ENCODE measurements at regions of chr1 and their contacts with region 1.

Region 1: DNA sequence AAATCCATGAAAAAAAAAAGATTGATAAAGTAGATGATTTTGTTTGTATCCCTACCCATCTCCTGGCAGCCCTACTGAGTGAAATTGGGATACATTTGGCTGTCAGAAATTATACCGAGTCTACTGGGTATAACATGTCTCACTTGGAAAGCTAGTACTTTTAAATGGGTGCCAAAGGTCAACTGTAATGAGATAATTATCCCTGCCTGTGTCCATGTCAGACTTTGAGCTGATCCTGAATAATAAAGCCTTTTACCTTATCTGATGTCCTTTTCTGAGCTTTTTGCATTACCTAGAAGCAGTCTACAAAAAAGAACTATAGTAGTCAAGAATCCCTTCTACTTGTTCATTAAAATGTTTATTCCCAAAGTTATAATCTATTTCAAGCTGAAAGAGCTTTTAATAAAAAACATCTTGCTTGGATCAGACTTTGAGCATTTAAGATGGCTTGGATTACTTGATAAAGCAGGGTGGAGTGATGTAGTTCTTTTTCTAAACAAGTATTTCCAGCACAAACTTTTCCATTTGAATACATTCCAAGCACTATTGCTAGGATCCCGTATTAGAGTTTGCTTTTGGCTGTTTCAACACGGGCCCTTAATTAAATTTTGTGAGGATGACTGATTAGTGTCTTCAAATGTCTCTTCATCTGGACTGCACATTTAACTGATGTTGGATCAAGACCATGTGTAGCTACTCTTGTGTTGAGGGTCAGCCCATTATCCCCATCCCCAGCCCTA is 69.2 kb downstream of the DTL start:
- DNase-seq: no peak
- ATAC-seq: no peak
- H3K4me3 ChIP-seq: no peak overlapping the region
- H3K27ac ChIP-seq: no peak overlapping the region
- H3K4me1 ChIP-seq: no peaks in the 10 kb centered on the region
- H3K27me3 ChIP-seq: no peaks in the 10 kb centered on the region
- CTCF ChIP-seq: no peak

Region 2: GRCh38 chr1:211951856-211952255 is 152.9 kb before region 1 on chr1:
- CTCF ChIA-PET with region 1: no interaction called
- POLR2A ChIA-PET with region 1: interaction called, 12 read pairs
- in situ Hi-C with region 1: no loop called
- intact Hi-C with region 1: no loop called
- DNase-seq: peak; percentile 81
- ATAC-seq: peak; percentile 76
- H3K4me3 ChIP-seq: no peak overlapping the region
- H3K27ac ChIP-seq: no peak overlapping the region
- H3K4me1 ChIP-seq: no peaks in the 10 kb centered on the region
- H3K27me3 ChIP-seq: no peaks in the 10 kb centered on the region
- CTCF ChIP-seq: no peak

Region 3: GRCh38 chr1:212545941-212546635 is 441.3 kb after region 1 on chr1:
- CTCF ChIA-PET with region 1: no interaction called
- POLR2A ChIA-PET with region 1: interaction called, 12 read pairs
- in situ Hi-C with region 1: no loop called
- intact Hi-C with region 1: no loop called
- DNase-seq: no peak
- ATAC-seq: no peak
- H3K4me3 ChIP-seq: no peak overlapping the region
- H3K27ac ChIP-seq: no peak overlapping the region
- H3K4me1 ChIP-seq: no peaks in the 10 kb centered on the region
- H3K27me3 ChIP-seq: peaks cover 6% of the 10 kb centered on the region; the same call in 1 of the 2 replicates
- CTCF ChIP-seq: no peak

Region 4: GRCh38 chr1:212586206-212587015 is 481.7 kb after region 1 on chr1:
- CTCF ChIA-PET with region 1: no interaction called
- POLR2A ChIA-PET with region 1: no interaction called
- in situ Hi-C with region 1: no loop called
- intact Hi-C with region 1: loop called (anchors 10 kb)
- DNase-seq: no peak
- ATAC-seq: no peak
- H3K4me3 ChIP-seq: no peak overlapping the region
- H3K27ac ChIP-seq: no peak overlapping the region
- H3K4me1 ChIP-seq: no peaks in the 10 kb centered on the region; the same call in 1 of the 2 replicates
- H3K27me3 ChIP-seq: peaks cover 4% of the 10 kb centered on the region; the same call in 1 of the 2 replicates
- CTCF ChIP-seq: no peak

Measured in Panc1 (cell line).